Thyroid gland (tissue), 4 donors: ENCODE measurements at regions of chr7 and their contacts with region 1.

Region 1: DNA sequence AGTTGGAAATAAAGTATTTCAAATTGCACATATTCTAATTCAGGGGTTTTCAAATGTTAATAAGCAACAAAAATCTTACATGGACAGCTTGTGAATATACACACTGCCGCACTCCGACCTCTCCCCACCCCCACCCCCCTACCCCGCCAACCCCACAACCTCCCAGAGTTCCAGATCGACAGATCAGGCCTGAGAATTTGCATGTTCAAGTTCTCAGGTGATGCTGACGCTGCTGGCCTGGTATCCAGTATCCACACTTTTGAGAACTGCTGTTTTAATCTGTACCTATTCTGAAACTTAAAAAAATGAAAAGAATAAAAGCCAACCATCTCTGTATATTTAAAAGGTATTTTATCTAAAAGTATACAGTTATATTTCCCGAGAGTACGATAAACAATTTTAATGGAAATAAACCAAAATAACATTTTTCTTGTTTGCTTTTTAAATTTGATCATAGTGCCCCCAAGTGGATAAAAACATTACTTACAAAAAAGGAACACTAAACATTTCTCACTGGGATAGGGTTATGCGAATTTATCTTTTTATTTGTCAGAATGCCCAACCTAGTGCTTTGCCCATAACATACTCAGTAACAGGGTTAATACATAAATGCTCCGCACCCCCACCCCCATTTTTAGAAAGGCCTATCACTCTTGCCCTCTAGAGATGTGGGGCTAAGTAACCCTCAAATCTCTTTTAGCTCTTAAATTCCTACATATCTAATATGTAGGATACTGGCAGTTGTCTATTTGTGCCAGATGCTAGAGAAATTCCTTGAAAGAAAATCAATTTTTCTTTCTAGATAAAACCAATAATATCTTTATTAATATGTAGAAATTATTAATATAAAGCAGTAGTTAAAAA is 166.3 kb downstream of the RNF133 start:
- DNase-seq: no peak
- H3K4me3 ChIP-seq: no peak overlapping the region
- H3K27ac ChIP-seq: no peak overlapping the region
- H3K4me1 ChIP-seq: no peaks in the 10 kb centered on the region
- H3K27me3 ChIP-seq: no peaks in the 10 kb centered on the region
- CTCF ChIP-seq: peak in 3 of 6 experiments; percentile 38 to 40 (median 39)
- POLR2A ChIP-seq: no peak

Region 2: GRCh38 chr7:122219253-122219865 is 313.3 kb before region 1 on chr7:
- intact Hi-C with region 1: loop called (anchors 5 kb)
- DNase-seq: no peak
- H3K4me3 ChIP-seq: no peak overlapping the region
- H3K27ac ChIP-seq: no peak overlapping the region
- H3K4me1 ChIP-seq: no peaks in the 10 kb centered on the region
- H3K27me3 ChIP-seq: no peaks in the 10 kb centered on the region
- CTCF ChIP-seq: peak; percentile 22 to 79 (median 60)
- POLR2A ChIP-seq: no peak

Region 3: GRCh38 chr7:122743211-122743610 is 210.6 kb after region 1 on chr7:
- intact Hi-C with region 1: no loop called
- DNase-seq: no peak
- H3K4me3 ChIP-seq: no peak overlapping the region
- H3K27ac ChIP-seq: no peak overlapping the region
- H3K4me1 ChIP-seq: no peaks in the 10 kb centered on the region
- H3K27me3 ChIP-seq: no peaks in the 10 kb centered on the region
- CTCF ChIP-seq: no peak
- POLR2A ChIP-seq: no peak